A673 (cell line): ENCODE measurements at regions of chr22 and their contacts with region 1.

Region 1: GRCh38 chr22:19432133-19432851 is at the start of gene MRPL40:
- DNase-seq: peak; percentile 96
- H3K4me3 ChIP-seq: peak within 1 kb of the TSS; percentile 89
- H3K27ac ChIP-seq: peak within 1 kb of the TSS; percentile 99
- H3K4me1 ChIP-seq: no peaks in the 10 kb centered on the region
- H3K27me3 ChIP-seq: no peaks in the 10 kb centered on the region
- CTCF ChIP-seq: no peak
- total RNA-seq, gene MRPL40: 21.9 and 23.1 TPM in 2 replicates

Region 2: GRCh38 chr22:19479357-19480172 is 47.3 kb after region 1 on chr22 and contains the start of gene CDC45:
- CTCF ChIA-PET with region 1: no interaction called
- POLR2A ChIA-PET with region 1: no interaction called
- intact Hi-C with region 1: loop called (anchors 2 kb)
- DNase-seq: peak; percentile 99
- H3K4me3 ChIP-seq: peak within 1 kb of the TSS; percentile 75
- H3K27ac ChIP-seq: peak within 1 kb of the TSS; percentile 99
- H3K4me1 ChIP-seq: peaks cover 9% of the 10 kb centered on the region
- H3K27me3 ChIP-seq: no peaks in the 10 kb centered on the region
- CTCF ChIP-seq: no peak
- total RNA-seq, gene CDC45: 79.1 and 79.2 TPM in 2 replicates

Region 3: GRCh38 chr22:19717691-19718455 is 285.6 kb after region 1 on chr22:
- CTCF ChIA-PET with region 1: no interaction called
- POLR2A ChIA-PET with region 1: no interaction called
- intact Hi-C with region 1: loop called (anchors 5 kb)
- DNase-seq: peak; percentile 80
- H3K4me3 ChIP-seq: peak overlapping the region; percentile 81
- H3K27ac ChIP-seq: peak overlapping the region; percentile 87
- H3K4me1 ChIP-seq: peaks cover 10% of the 10 kb centered on the region
- H3K27me3 ChIP-seq: no peaks in the 10 kb centered on the region
- CTCF ChIP-seq: peak; percentile 62